AG04449 (cell line): ENCODE measurements at regions of chr5 and their contacts with region 1.

Region 1: GRCh38 chr5:146516151-146516475 is at the start of gene GPR151:
- DNase-seq: no peak
- H3K4me3 ChIP-seq: no peak within 1 kb of the TSS
- CTCF ChIP-seq: no peak

Region 2: DNA sequence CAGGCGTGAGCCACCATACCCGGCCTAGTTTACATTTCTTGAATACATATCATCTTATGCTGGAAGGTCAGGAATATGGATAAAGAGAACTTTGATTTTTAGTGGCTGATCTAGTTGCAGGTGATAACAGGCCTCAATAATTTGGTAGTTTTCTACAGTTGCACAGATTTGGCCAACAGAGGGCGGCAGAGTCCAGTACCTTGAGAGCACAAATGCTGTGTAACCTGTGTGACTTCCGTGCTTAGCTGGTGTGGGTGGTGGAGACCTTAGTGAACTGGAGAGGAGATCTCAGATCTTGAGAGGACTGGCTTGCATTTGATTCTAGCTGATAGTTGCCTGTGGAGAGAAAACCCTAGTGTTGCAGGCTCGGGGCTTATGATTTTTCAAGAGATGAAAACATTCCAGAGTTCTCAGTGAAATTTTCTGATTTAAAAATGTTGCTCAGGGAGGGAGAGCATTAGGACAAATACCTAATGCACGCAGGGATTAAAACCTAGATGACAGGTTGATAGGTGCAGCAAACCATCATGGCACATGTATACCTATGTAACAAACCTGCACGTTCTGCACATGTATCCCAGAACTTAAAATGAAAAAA is 17.2 kb after region 1 on chr5:
- CTCF ChIA-PET with region 1: interaction called, 31 read pairs
- POLR2A ChIA-PET with region 1: no interaction called
- DNase-seq: no peak
- H3K4me3 ChIP-seq: no peak overlapping the region
- CTCF ChIP-seq: peak; percentile 82